Left cardiac atrium (tissue), 4 donors: ENCODE measurements at regions of chrX and their contacts with region 1.

Region 1: DNA sequence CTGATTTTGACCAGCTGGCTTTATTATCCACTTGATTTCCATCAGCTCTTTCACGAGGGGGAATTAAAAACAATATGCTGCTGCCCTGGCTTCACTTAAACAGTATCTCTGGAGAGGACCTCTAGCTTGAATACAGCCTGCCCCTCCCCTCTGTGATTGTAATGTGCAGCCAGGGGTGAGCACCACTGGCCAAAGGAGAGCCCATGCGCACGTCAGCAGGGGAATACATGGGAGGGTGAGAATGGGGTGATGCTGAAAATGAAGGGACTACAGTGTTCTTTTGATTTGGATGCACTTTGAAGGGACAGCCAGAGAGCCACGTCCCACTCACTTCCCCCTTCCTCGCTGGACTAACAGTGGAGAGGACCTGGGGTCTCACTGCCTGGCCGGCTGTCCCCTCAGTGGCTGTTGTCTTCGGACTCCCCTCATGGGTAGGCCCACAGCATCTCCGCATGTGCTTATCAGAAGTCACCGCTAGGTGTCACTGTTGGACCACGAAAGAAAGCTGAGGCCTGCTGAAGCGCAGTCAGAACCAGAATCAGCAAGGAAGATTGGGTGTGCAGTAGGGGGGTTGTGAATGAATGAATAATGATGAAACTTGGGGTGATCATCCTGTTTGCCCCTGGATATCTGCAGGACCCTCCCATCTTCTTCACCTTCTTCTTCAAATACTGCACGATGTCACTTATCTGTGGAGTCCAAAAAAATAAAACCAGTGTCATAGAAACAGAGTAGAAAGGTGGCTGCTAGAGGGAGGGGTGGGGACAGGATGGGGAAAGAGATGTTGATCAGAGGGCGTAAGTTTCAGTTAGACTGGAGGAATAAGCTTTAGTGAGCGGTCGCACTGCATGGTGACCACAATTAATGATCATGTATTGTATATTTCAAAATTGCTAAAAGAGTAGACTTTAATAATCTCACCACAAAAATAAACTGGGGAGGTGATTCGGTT is 32.8 kb downstream of the CLCN4 start:
- DNase-seq: peak; percentile 70
- ATAC-seq: peak; percentile 88 to 93

Region 2: DNA sequence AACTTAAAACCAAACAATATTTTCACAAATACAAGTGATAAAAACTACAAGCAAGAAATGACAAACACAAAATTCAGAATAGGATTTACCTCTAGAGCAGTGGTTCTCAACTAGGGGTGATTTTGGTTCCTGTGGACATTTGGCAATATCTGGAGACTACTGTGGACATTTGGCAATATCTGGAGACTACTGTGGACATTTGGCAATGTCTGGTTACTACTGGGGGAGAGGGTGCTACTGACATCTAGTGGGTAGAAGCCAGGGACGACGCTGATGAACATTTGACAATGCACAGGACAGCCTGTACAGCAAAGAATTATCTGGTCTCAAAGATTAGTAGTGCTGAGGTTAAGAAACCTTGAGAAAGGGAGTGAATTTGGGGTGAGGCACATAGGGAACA is 137.0 kb after region 1 on chrX:
- intact Hi-C with region 1: loop called in 1 of 2 experiments (anchors 5 kb)
- DNase-seq: peak; percentile 25
- ATAC-seq: peak; percentile 47

Region 3: DNA sequence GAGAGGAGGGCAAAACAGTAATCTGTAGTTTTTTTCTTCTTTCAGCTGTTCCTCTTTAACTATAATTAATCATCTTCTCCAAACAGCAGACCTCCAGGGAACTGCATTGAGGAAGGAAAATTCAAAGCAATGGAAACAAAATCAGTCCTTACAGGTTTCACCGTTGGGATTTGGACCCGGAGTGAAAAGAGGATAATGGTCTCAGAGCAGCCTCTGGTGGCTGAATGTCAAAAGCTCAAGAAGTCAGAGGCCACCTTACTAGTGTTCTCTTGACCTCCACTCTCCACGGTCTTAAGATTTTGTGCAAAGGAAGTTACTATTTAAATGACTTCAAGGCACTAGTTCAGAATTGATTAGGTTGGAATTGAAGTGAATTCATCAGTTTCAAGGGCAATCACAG is 446.7 kb after region 1 on chrX:
- intact Hi-C with region 1: loop called in 1 of 2 experiments (anchors 10 kb)
- DNase-seq: peak; percentile 22
- ATAC-seq: peak in 1 of 2 donors; percentile 77

Region 4: GRCh38 chrX:10722851-10723250 is 533.3 kb after region 1 on chrX:
- intact Hi-C with region 1: loop called in 1 of 2 experiments (anchors 2 kb)
- DNase-seq: peak; percentile 42
- ATAC-seq: peak; percentile 61 to 78

Region 5: DNA sequence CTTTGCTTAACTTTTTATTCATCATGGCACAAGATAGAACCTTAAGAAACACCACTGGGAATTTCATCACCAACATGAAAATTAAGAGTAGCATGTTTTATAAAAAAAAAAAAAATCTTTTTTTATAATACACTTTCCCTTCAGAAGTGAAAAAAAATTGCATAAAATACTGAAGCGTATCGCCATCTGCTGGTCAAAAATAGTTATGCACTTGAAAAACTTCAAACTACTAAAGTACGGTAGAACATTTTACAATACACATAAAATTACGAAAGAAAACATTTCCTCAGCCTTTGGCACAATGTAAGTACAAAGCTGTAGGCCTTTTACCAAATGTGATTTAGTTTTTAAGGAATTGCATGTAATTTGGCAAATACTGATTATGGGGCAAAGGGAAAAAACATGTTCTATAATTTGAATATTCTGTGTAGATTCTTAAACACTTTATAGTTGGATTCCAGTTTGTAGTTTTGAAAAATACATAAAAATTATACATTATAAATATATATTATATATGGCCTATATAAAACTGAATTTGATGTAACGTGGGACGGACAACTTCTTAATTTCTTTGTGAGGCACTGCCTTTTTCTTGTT is 948.0 kb after region 1 on chrX:
- intact Hi-C with region 1: loop called in 1 of 2 experiments (anchors 5 kb)
- DNase-seq: no peak
- ATAC-seq: peak in 1 of 2 donors; percentile 15